ENCODE measurements at regions of chr22 and their contacts with region 1.

Region 1: GRCh38 chr22:20174785-20175596 is 24.1 kb upstream of the CCDC188 start:
- DNase-seq: no peak
- H3K4me3 ChIP-seq: no peak overlapping the region
- H3K27ac ChIP-seq: no peak overlapping the region
- H3K4me1 ChIP-seq: no peaks in the 10 kb centered on the region
- H3K27me3 ChIP-seq: peaks cover 2% of the 10 kb centered on the region
- CTCF ChIP-seq: peak in 1 of 2 donors; percentile 7

Region 2: DNA sequence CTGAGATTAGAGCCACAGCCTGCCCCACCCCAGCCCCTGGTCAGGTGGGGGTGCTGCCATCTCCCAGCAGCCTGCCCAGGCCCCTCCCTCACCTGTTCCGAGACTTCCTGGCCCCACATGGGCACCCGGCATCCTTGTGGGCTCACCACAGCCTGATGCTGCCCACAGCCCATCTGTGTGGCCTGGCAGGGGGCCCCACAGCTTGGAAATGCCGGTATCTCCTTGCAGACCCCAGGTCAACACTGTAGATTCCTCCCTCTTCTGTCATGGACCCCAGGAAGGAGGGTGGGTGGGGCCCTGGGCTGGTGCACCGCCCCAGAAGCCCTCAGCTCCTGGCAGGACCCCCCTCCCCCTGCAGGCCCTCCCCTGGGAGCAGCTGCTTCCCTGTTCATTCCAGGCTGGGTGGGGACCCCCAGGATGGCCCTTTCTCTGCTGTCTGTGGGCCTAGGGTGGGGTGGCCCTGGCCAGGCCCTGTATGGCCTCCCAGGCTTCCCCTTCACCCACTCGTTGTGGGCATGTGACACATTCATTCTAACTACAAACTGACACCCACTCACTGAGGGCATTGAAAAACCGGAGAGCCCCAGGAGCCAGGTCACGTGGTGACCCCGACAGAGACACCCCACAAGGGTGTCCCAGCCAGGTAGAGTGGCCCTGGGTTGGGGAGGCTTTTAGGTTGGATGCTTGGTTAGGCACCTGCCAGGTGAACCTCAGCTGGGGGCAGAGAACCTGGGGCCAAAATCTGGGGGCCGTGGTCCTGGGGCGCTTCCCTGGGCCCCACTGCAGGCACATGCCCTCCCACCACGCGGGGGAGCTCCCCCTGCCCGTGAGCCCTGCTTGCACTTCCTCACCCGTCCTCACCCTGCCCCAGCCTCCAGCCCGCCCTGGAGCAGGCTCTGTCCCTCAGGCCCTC is 19.9 kb after region 1 on chr22:
- CTCF ChIA-PET with region 1: no interaction called
- dilution Hi-C with region 1: no loop called
- in situ Hi-C with region 1: no loop called
- intact Hi-C with region 1: no loop called
- DNase-seq: no peak
- H3K4me3 ChIP-seq: no peak overlapping the region
- H3K27ac ChIP-seq: no peak overlapping the region
- H3K4me1 ChIP-seq: no peaks in the 10 kb centered on the region
- H3K27me3 ChIP-seq: no peaks in the 10 kb centered on the region
- CTCF ChIP-seq: no peak

Region 3: DNA sequence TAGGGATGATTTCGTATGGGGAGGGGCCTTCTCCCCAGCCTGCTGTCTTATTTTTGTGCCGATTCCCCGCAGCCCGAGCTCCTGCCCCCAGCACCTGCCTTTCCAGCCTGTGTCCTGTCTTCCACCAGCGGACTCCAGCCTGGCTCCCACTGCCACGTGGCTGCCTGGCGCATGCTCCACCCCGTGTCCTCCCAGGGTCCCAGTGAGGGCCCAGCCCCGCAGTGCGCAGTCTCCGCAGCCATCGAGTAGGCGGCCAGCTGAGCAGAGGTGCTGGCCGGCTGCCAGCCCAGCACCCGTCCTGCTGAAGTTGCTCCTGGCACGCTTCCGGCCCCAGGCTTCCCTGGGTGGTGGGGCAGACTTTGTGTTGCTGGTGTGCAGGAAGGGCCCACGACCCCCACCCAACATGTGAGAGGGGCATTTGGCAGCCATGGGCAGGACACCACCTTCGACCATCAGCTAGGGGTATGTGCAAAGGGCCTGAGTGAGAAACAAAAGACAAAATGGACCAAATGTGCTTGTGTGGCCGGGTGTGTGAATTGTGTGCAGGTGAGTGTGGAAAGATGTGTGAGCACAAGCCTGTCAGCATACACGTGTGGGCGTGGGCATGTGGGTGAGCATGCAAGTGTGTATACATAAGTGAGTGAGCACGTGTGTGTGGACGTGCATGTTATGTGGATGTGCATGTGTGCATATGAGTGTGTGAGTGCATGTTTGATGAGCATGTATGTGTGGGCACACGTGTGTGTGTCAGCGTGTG is 37.2 kb after region 1 on chr22:
- CTCF ChIA-PET with region 1: no interaction called
- dilution Hi-C with region 1: loop called (anchors 5 kb)
- in situ Hi-C with region 1: no loop called
- intact Hi-C with region 1: no loop called
- DNase-seq: peak; percentile 13
- H3K4me3 ChIP-seq: no peak overlapping the region
- H3K27ac ChIP-seq: no peak overlapping the region
- H3K4me1 ChIP-seq: peaks cover 20% of the 10 kb centered on the region
- H3K27me3 ChIP-seq: no peaks in the 10 kb centered on the region
- CTCF ChIP-seq: no peak

Region 4: DNA sequence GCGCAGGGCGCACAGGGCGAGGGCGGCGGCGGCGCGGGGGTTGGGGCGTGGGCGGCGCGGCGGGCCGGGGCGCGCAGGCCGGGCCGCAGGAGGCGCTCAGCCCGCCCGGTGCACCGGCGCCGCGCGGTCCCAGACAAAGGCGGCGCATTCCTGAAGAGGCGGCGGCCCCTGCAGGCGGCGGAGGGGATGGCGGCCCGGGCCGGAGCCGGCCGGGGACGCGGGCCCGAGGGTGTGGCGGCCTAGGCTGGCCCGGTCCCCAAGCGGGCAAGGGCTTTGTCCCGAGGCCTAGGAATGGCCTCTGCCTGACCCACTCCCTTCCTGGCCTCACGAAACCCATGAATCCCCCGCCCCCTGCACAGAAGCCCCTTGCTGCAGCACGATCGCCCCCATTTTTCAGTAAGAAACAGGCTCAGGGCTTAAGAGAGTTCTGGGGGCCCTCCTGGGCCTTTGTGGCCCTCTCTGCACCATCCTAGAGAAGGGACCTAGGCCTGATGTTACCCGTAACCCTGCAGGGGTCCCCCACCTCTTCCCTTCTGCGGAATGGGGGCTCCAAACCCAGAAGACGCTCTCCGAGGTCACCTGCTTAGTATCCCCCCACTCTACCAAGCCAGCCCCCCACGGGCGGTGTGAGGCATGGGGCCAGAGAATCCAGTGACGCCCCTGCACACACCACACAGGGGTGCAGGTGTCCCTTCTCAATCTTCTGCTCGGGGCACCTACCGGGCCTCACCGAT is 93.5 kb after region 1 on chr22 and contains the start of gene RTN4R:
- CTCF ChIA-PET with region 1: no interaction called
- dilution Hi-C with region 1: loop called (anchors 5 kb)
- in situ Hi-C with region 1: no loop called
- intact Hi-C with region 1: no loop called
- DNase-seq: peak; percentile 41
- H3K4me3 ChIP-seq: peak within 1 kb of the TSS; percentile 59 to 60 (median 60)
- H3K27ac ChIP-seq: no peak within 1 kb of the TSS
- H3K4me1 ChIP-seq: peaks cover 6% of the 10 kb centered on the region
- H3K27me3 ChIP-seq: no peaks in the 10 kb centered on the region
- CTCF ChIP-seq: peak; percentile 34 to 56
- total RNA-seq, gene RTN4R: 3.8 to 10.5 TPM

Region 5: DNA sequence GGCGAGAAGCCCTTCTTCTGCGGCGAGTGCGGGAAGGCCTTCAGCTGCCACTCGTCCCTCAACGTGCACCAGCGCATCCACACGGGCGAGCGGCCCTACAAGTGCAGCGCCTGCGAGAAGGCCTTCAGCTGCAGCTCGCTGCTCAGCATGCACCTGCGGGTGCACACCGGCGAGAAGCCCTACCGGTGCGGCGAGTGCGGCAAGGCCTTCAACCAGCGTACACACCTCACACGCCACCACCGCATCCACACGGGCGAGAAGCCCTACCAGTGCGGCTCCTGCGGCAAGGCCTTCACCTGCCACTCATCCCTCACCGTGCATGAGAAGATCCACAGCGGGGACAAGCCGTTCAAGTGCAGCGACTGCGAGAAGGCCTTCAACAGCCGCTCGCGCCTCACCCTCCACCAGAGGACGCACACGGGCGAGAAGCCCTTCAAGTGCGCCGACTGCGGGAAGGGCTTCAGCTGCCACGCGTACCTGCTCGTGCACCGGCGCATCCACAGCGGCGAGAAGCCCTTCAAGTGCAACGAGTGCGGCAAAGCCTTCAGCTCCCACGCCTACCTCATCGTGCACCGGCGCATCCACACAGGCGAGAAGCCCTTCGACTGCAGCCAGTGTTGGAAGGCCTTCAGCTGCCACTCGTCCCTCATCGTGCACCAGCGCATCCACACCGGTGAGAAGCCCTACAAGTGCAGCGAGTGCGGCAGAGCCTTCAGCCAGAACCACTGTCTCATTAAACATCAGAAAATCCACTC is 231.1 kb after region 1 on chr22:
- CTCF ChIA-PET with region 1: no interaction called
- dilution Hi-C with region 1: loop called (anchors 10 kb)
- in situ Hi-C with region 1: no loop called
- intact Hi-C with region 1: no loop called
- DNase-seq: no peak
- H3K4me3 ChIP-seq: no peak overlapping the region
- H3K27ac ChIP-seq: no peak overlapping the region
- H3K4me1 ChIP-seq: no peaks in the 10 kb centered on the region
- H3K27me3 ChIP-seq: no peaks in the 10 kb centered on the region
- CTCF ChIP-seq: no peak

Measured in mammary epithelial cell (primary cell).